A549 (cell line): ENCODE measurements at regions of chr4 and their contacts with region 1.

Region 1: DNA sequence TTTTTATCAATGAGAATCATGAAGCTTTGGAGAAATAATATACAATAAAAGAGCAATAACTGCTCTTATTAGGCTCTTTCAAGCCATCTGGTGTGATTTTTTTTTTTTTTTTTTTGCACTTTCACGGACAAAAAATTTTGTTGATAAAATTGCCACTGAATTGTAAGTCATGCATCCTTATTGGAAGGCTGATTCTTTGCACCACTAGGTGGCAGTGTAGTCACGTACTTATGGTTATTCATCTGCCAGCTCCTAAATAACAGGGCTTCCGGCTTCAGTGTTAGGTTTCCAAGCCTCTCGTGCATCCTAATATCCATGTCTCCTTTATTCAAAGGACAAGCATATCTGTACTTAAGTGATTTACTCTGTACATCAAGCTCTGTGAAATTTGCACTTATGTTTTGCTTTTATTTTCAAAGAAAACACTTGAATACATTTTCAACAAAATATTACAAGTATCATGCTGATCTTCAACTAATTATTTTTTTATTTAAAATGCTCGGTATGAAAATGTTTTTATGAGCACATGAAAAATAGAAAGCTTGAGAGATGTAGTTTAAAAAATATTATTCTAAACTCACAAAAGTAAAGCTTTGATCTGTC is 1578.3 kb upstream of the TENM3 start:
- DNase-seq: peak; percentile 35 to 81
- ATAC-seq: peak; percentile 77 to 84; a peak in 5 of 6 replicates
- H3K4me3 ChIP-seq: no peak overlapping the region
- H3K27ac ChIP-seq: no peak overlapping the region
- H3K4me1 ChIP-seq: no peaks in the 10 kb centered on the region
- CTCF ChIP-seq: peak; percentile 57
- EP300 ChIP-seq: no peak
- POLR2A ChIP-seq: no peak
- RAD21 ChIP-seq: peak; percentile 48 to 57

Region 2: GRCh38 chr4:180550106-180550505 is 114.8 kb before region 1 on chr4:
- CTCF ChIA-PET with region 1: no interaction called
- POLR2A ChIA-PET with region 1: no interaction called
- DNase-seq: no peak
- ATAC-seq: no peak
- H3K4me3 ChIP-seq: no peak overlapping the region
- H3K27ac ChIP-seq: no peak overlapping the region
- H3K4me1 ChIP-seq: no peaks in the 10 kb centered on the region
- CTCF ChIP-seq: no peak
- EP300 ChIP-seq: no peak
- POLR2A ChIP-seq: no peak
- RAD21 ChIP-seq: no peak

Region 3: GRCh38 chr4:180650273-180650672 is 14.6 kb before region 1 on chr4:
- CTCF ChIA-PET with region 1: interaction called, 10 read pairs
- POLR2A ChIA-PET with region 1: no interaction called
- DNase-seq: no peak
- ATAC-seq: no peak
- H3K4me3 ChIP-seq: no peak overlapping the region
- H3K27ac ChIP-seq: no peak overlapping the region
- H3K4me1 ChIP-seq: no peaks in the 10 kb centered on the region
- CTCF ChIP-seq: no peak
- EP300 ChIP-seq: no peak
- POLR2A ChIP-seq: no peak
- RAD21 ChIP-seq: no peak

Region 4: GRCh38 chr4:180680305-180680704 is 15.4 kb after region 1 on chr4:
- CTCF ChIA-PET with region 1: interaction called, 10 read pairs
- POLR2A ChIA-PET with region 1: no interaction called
- DNase-seq: no peak
- ATAC-seq: no peak
- H3K4me3 ChIP-seq: no peak overlapping the region
- H3K27ac ChIP-seq: no peak overlapping the region
- H3K4me1 ChIP-seq: no peaks in the 10 kb centered on the region
- CTCF ChIP-seq: no peak
- EP300 ChIP-seq: no peak
- POLR2A ChIP-seq: no peak
- RAD21 ChIP-seq: no peak